ENCODE measurements at regions of chr1 and their contacts with region 1.

Region 1: GRCh38 chr1:205523891-205524793 is 19.7 kb downstream of the CDK18 start:
- DNase-seq: peak; percentile 95
- H3K4me3 Mint-ChIP-seq: no peak overlapping the region
- H3K27ac Mint-ChIP-seq: no peak overlapping the region
- H3K4me1 Mint-ChIP-seq: no peaks in the 10 kb centered on the region
- H3K27me3 Mint-ChIP-seq: no peaks in the 10 kb centered on the region
- CTCF ChIP-seq: peak; percentile 99

Region 2: DNA sequence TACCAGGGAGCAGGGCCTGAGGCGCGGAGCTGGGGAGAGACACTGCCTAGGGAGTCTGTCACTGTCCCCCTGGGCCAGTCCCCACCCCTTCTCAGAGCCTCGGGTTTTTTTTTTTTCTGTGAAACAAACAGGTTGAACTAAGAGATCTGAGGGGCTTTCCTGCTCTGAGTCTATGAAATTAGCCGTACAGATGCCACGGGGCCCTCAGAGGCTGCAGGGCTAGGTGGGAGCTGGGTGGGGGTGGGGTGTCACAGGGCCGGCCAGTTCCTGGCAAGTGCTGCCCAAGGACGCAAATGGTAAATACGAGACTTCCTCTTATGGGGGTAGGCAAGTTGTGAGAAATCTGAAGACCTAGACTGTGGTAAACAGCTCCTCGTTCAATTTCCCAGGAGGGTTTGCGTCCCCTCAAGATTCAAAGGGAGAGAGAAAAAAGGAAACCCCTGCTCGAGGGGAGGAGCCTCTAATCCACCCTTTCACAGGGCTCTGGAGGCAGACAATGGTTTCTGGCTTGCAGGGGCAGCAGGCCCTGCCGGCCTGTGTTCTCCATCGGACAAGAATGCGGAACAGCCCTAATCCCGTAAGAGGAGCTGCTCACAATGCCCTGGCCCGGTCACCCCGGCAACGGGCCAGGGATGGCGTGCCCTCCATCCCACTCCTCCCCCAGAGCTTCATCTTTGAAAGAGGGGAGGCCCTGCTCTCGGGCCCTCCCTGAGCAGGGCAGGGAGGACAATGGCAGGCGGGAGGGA is 210.4 kb before region 1 on chr1:
- CTCF ChIA-PET with region 1: no interaction called
- POLR2A ChIA-PET with region 1: no interaction called
- intact Hi-C with region 1: no loop called
- DNase-seq: no peak
- H3K4me3 Mint-ChIP-seq: no peak overlapping the region
- H3K27ac Mint-ChIP-seq: peak overlapping the region; percentile 33
- H3K4me1 Mint-ChIP-seq: peaks cover 33% of the 10 kb centered on the region
- H3K27me3 Mint-ChIP-seq: no peaks in the 10 kb centered on the region
- CTCF ChIP-seq: no peak

Region 3: GRCh38 chr1:205329719-205330118 is 194.4 kb before region 1 on chr1:
- CTCF ChIA-PET with region 1: interaction called, 230 read pairs
- POLR2A ChIA-PET with region 1: no interaction called
- intact Hi-C with region 1: no loop called
- DNase-seq: no peak
- H3K4me3 Mint-ChIP-seq: no peak overlapping the region
- H3K27ac Mint-ChIP-seq: no peak overlapping the region
- H3K4me1 Mint-ChIP-seq: peaks cover 12% of the 10 kb centered on the region
- H3K27me3 Mint-ChIP-seq: peaks cover 47% of the 10 kb centered on the region
- CTCF ChIP-seq: no peak

Region 4: GRCh38 chr1:205391386-205391785 is 132.8 kb before region 1 on chr1:
- CTCF ChIA-PET with region 1: interaction called, 130 read pairs
- POLR2A ChIA-PET with region 1: interaction called, 21 read pairs
- intact Hi-C with region 1: no loop called
- DNase-seq: no peak
- H3K4me3 Mint-ChIP-seq: no peak overlapping the region
- H3K27ac Mint-ChIP-seq: no peak overlapping the region
- H3K4me1 Mint-ChIP-seq: no peaks in the 10 kb centered on the region
- H3K27me3 Mint-ChIP-seq: peaks cover 52% of the 10 kb centered on the region
- CTCF ChIP-seq: no peak

Region 5: GRCh38 chr1:205440476-205441317 is 83.4 kb before region 1 on chr1:
- CTCF ChIA-PET with region 1: interaction called, 17 read pairs
- POLR2A ChIA-PET with region 1: interaction called, 3 read pairs
- intact Hi-C with region 1: no loop called
- DNase-seq: peak; percentile 93
- H3K4me3 Mint-ChIP-seq: peak overlapping the region; percentile 1
- H3K27ac Mint-ChIP-seq: peak overlapping the region; percentile 77
- H3K4me1 Mint-ChIP-seq: peaks cover 25% of the 10 kb centered on the region
- H3K27me3 Mint-ChIP-seq: no peaks in the 10 kb centered on the region
- CTCF ChIP-seq: no peak

Region 6: DNA sequence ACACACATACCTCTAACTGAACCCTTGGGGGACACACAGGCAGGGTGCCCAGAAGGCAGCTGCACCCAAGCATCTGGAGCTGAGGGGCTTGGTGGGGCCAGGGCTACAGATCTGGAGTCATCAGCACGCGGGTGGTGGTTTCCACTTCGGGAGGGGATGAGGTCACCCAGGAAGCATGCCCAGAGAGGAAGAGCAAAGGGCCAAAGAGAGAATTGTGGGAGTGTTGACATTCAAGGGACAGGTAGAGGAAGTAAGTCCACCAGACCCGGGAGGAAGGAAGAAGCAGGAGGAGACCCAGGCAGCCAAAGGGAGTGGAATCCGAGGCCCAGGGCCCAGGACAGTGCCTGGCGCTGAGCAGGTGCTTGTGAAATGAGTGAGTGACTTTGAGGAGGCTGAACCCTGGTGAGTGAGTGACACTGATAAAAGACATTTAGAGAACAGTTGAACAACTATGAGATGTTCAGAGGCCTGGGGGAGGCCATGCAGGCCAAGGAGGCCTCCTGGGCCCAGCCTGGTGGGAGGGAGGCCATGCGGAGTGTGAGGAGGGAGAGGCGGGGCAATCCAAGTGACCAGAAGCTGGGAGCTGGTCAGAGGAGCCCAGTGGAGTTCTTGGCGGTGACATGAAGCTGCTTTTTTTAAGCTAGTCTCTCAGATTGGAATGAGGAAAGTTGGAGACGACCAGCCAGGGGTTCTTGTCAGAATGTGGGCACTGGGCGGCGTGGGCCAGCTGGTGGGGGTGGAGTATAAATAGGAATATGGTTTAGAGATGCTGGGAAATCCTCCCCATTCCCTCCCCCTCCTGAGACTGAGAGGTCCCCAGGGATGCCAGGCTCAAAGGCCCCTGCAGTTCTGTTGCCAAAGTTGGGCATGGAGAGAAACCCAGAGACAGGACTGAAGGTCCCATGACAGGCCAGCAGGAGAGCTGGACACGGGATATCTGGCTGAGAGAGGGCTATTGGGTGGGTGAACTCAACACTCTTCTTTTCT is 11.8 kb before region 1 on chr1:
- CTCF ChIA-PET with region 1: interaction called, 1,608 read pairs
- POLR2A ChIA-PET with region 1: interaction called, 6 read pairs
- intact Hi-C with region 1: no loop called
- DNase-seq: no peak
- H3K4me3 Mint-ChIP-seq: no peak overlapping the region
- H3K27ac Mint-ChIP-seq: no peak overlapping the region
- H3K4me1 Mint-ChIP-seq: no peaks in the 10 kb centered on the region
- H3K27me3 Mint-ChIP-seq: no peaks in the 10 kb centered on the region
- CTCF ChIP-seq: no peak

Region 7: DNA sequence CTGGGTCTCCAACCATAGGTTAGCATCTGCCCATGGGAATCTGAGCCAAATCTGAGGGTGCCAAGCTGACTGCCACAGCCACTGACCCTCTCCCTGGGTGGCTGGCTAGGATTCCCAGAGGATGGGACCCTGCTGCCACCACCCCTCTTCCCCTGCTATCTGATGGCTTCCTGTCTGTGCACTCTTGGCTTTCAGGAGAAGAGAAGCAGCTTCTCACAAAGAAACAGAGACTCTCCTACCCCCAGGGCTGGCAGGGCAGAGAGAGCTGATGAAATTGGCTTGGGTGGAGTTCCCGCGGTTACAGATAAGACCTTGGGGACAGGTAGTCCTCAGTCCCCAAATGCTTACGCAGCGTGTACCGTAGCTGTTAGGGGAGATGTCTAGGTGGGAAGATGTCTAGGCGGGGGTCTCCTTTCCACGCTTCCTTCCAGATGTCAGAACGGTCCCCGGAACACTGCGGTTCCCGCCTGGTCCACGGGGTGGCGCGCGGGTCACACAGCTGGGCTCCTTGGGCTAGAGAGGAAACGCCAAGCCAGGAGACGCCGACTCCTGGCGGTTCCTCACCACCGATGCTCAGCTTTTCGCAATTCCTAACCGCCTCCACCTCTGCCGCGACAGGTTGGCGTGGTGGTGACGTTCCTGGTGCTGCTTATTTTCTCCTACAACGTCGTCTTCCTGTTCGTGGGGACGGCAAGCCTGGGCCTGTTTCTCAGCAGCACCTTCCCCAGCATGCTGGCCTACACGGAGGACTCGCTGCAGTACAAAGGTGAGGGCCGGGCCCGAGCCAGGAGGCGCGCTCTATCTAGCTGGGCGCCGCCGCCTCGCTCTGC is 67.6 kb after region 1 on chr1:
- CTCF ChIA-PET with region 1: interaction called, 25 read pairs
- POLR2A ChIA-PET with region 1: interaction called, 15 read pairs
- intact Hi-C with region 1: loop called (anchors 1 kb)
- DNase-seq: peak; percentile 99
- H3K4me3 Mint-ChIP-seq: peak overlapping the region; percentile 64
- H3K27ac Mint-ChIP-seq: peak overlapping the region; percentile 39
- H3K4me1 Mint-ChIP-seq: peaks cover 18% of the 10 kb centered on the region
- H3K27me3 Mint-ChIP-seq: no peaks in the 10 kb centered on the region
- CTCF ChIP-seq: peak; percentile 100